BJ (cell line): ENCODE measurements at regions of chr16 and their contacts with region 1.

Region 1: GRCh38 chr16:80938035-80938865 is 68.4 kb downstream of the CMC2 start:
- DNase-seq: peak; percentile 98
- H3K4me3 ChIP-seq: 0 out of 2 replicates have a peak overlapping the region, but pooled peaks have one; percentile 1
- H3K27me3 ChIP-seq: no peaks in the 10 kb centered on the region
- CTCF ChIP-seq: no peak

Region 2: DNA sequence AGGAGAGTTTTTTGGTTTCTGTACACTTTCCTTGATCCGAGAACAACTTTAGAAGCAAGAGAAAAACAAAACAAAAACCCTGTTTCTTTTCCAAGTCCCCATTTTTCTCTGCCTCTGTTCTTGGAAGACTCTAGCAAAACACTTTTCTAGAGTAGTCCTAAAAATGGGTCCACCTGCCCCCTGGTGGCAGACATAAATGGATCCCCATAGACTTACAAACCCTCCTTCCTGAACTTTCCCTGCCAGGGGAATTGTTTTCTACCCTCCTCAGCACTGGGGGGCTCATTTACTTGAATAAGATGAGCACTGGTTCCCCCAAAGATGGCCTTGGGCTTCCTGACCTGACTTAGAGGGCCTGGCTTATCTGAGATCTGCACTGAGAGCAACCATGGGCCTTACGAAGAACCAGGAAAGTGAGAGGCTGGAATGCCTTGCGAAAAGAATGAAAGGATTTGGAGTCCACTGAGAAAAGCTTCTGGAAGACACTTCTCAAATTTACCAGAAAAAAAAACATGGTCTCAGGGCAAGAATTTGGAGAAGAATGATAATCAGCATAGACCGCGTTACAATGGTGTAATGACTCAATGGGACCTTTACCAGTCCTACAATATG is 85.9 kb before region 1 on chr16:
- CTCF ChIA-PET with region 1: no interaction called
- POLR2A ChIA-PET with region 1: no interaction called
- DNase-seq: no peak
- H3K4me3 ChIP-seq: no peak overlapping the region
- H3K27me3 ChIP-seq: no peaks in the 10 kb centered on the region
- CTCF ChIP-seq: peak; percentile 51

Region 3: DNA sequence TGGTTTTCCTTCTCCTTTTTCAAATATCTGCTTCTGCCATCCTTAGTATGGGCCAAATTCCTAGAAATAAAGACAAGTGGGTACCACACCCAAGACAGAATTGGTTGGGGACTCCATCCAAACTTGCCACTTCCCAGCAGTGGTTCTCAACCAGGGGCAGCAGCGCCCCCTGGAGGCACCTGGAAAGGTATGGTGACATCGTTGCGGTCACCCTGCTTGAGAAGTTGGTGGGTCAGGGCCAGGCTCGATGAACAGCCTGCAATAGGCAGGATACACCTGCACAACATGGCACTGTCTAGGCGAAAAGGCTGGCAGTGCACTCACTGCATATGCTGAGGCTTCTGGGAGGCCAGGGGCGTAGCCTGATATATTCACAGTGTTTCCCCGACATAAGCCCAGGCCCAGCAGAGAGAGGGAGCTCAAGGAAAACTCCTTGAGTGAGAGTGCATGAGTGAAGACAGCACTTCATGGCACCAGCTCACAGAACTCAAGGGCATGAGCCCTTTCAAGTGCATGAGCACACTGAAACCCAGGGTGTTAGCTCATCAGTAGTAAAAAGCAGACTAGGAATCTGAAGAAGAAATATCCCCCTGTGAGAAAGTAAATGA is 10.7 kb after region 1 on chr16:
- CTCF ChIA-PET with region 1: interaction called, 17 read pairs
- POLR2A ChIA-PET with region 1: no interaction called
- DNase-seq: no peak
- H3K4me3 ChIP-seq: no peak overlapping the region
- H3K27me3 ChIP-seq: no peaks in the 10 kb centered on the region
- CTCF ChIP-seq: peak; percentile 73

Region 4: DNA sequence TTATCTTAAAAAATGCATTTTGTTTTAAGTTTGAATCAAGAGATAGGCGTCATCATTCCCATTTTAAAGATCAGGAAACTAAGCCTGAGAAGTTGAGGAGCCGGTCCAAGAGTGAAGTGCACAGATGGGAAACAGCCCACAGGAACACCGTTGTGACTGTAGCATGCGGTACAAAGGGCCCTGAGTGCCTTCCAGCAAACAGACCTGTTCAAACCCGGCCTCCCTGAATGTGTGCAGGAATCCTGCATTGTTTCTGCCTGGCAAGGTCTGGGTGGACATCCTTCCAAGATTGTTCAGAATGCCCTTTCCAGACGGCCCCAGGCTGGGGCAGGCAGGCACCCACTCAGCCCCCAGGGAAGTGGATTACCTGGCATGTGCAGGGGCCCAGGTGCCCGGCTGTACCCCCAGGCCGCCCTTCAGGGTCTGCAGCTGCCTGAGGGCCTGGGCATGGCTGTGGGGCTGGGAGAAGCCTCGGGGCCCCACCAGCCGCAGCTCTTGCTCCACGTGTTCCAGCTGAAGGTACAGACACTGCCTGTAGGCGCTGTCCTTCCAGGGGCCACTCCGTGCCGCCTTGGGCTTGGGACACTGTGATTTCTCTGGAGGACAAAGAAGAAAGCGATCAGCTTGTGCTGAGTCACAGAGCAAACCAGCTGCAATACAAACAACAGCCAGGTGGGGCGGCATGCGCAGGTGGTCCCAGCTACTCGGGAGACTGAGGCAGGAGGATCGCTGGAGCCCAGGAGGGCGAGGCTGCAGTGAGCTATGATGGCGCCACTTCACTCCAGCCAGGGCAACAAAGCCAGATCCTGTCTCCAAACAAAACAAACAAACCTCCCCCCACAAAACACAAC is 202.9 kb after region 1 on chr16:
- CTCF ChIA-PET with region 1: no interaction called
- POLR2A ChIA-PET with region 1: interaction called, 13 read pairs
- DNase-seq: no peak
- H3K4me3 ChIP-seq: no peak overlapping the region
- H3K27me3 ChIP-seq: no peaks in the 10 kb centered on the region; the same call in 1 of the 2 replicates
- CTCF ChIP-seq: peak; percentile 36

Region 5: GRCh38 chr16:81174654-81175571 is 236.7 kb after region 1 on chr16:
- CTCF ChIA-PET with region 1: no interaction called
- POLR2A ChIA-PET with region 1: no interaction called
- DNase-seq: peak; percentile 17
- H3K4me3 ChIP-seq: no peak overlapping the region
- H3K27me3 ChIP-seq: no peaks in the 10 kb centered on the region
- CTCF ChIP-seq: peak; percentile 32; the same call in 1 of the 2 replicates